ENCODE measurements at regions of chr1 and their contacts with region 1.

Region 1: GRCh38 chr1:21334214-21335087 is 44.2 kb upstream of the ECE1 start:
- DNase-seq: peak; percentile 90
- H3K4me3 ChIP-seq: peak overlapping the region; percentile 0 to 37 (median 31)
- H3K27ac ChIP-seq: peak overlapping the region; percentile 61 to 96 (median 91)
- H3K4me1 ChIP-seq: peaks cover 0 to 99% (median 96%) of the 10 kb centered on the region in 4 donors
- H3K27me3 ChIP-seq: no peaks in the 10 kb centered on the region
- CTCF ChIP-seq: peak; percentile 81 to 93 (median 88)
- EP300 ChIP-seq: no peak
- POLR2A ChIP-seq: no peak

Region 2: DNA sequence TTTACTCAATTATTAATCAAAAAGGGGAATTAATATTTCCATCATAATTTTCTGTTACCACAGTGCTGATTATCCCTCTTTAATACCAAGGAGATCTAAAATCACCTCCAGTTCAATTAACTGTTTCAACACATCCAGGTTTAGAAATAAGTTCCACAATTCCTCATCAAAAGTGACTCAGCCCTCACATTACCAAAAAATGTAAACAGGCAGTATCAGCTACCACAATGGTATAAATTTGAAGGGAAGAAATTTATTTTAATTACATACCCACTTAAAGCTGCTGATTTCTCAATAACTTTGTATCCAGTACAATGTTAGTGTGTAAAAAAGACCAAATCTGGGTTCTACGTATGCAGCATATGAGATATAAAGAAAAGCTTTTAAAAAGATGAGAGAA is 209.6 kb before region 1 on chr1:
- intact Hi-C with region 1: no loop called
- DNase-seq: no peak
- H3K4me3 ChIP-seq: no peak overlapping the region
- H3K27ac ChIP-seq: no peak overlapping the region
- H3K4me1 ChIP-seq: peaks cover 0 to 23% (median 21%) of the 10 kb centered on the region in 4 donors
- H3K27me3 ChIP-seq: no peaks in the 10 kb centered on the region
- CTCF ChIP-seq: no peak
- EP300 ChIP-seq: no peak
- POLR2A ChIP-seq: no peak

Region 3: DNA sequence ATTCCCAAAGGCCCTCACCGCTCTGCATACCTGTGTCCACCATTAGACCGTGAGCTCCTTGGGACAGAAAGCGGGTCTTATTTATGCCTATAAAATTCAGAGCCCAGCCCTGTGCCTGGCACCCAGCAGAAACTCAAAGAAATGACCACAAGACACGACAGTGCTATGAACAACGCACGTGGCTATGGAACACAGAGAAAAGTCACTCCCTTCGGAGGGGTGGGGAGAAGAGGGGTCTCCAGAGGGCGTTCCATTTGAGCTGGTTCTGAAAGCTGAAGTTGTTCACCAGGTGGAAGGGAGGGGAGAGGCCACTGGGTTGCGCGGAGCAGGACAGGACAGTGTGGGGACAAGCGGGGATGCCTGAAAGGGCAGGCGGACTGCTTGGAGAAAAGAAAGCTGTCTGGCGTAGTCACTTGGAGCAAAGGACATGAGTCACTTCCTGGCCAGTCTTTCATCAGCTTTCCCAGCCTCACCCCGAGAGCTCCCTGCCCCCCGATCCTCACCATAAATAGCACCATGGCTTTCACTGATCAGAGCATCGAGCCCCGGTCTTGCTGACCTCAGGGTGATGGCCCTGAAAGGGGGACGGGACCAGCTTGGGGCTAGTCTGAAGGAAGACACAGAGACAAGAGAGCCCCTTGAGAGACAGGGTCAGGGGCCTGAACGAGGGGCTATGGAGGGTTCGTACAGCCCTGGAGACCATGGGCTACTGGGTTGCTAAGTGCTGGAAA is 72.7 kb before region 1 on chr1:
- intact Hi-C with region 1: loop called (anchors 2 kb)
- DNase-seq: peak; percentile 92
- H3K4me3 ChIP-seq: peak overlapping the region in 1 of 4 donors; percentile 9
- H3K27ac ChIP-seq: peak overlapping the region; percentile 85 to 91 (median 86)
- H3K4me1 ChIP-seq: peaks cover 0 to 41% (median 36%) of the 10 kb centered on the region in 4 donors
- H3K27me3 ChIP-seq: no peaks in the 10 kb centered on the region
- CTCF ChIP-seq: no peak
- EP300 ChIP-seq: peak in 1 of 4 donors; percentile 79
- POLR2A ChIP-seq: no peak

Region 4: GRCh38 chr1:21308847-21309652 is 25.4 kb before region 1 on chr1:
- intact Hi-C with region 1: loop called (anchors 1 kb)
- DNase-seq: peak; percentile 97
- H3K4me3 ChIP-seq: peak overlapping the region in 1 of 4 donors; percentile 5
- H3K27ac ChIP-seq: peak overlapping the region; percentile 71 to 96 (median 91)
- H3K4me1 ChIP-seq: peaks cover 0 to 100% (median 97%) of the 10 kb centered on the region in 4 donors
- H3K27me3 ChIP-seq: no peaks in the 10 kb centered on the region
- CTCF ChIP-seq: no peak
- EP300 ChIP-seq: peak; percentile 65 to 90 (median 87)
- POLR2A ChIP-seq: no peak

Region 5: GRCh38 chr1:21318714-21319159 is 15.7 kb before region 1 on chr1:
- intact Hi-C with region 1: loop called (anchors 2 kb)
- DNase-seq: peak; percentile 98
- H3K4me3 ChIP-seq: no peak overlapping the region
- H3K27ac ChIP-seq: peak overlapping the region; percentile 83 to 96 (median 91)
- H3K4me1 ChIP-seq: peaks cover 0 to 100% (median 100%) of the 10 kb centered on the region in 4 donors
- H3K27me3 ChIP-seq: no peaks in the 10 kb centered on the region
- CTCF ChIP-seq: no peak
- EP300 ChIP-seq: peak in 3 of 4 donors; percentile 23 to 77 (median 57)
- POLR2A ChIP-seq: no peak

Region 6: DNA sequence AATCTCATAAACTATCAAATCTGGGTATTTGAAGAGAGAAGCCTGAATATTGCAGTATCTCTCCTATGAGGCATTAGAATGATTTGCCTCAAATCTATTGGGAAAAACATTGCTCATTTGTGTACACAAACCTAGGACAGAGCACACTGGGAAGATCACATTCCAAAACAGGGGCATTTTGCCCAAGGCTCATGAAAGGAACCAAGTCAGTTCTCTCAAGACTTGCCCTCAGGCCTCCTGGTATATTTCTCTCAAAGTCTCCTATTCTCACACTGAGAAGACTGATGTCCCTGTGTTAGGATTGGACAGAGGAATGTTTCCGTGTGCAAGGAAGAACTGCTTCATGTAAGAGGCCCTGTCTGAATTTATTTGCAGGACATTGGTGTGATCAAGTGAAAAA is 144.5 kb after region 1 on chr1:
- intact Hi-C with region 1: no loop called
- DNase-seq: no peak
- H3K4me3 ChIP-seq: no peak overlapping the region
- H3K27ac ChIP-seq: no peak overlapping the region
- H3K4me1 ChIP-seq: no peaks in the 10 kb centered on the region
- H3K27me3 ChIP-seq: no peaks in the 10 kb centered on the region
- CTCF ChIP-seq: no peak
- EP300 ChIP-seq: no peak
- POLR2A ChIP-seq: no peak

Region 7: DNA sequence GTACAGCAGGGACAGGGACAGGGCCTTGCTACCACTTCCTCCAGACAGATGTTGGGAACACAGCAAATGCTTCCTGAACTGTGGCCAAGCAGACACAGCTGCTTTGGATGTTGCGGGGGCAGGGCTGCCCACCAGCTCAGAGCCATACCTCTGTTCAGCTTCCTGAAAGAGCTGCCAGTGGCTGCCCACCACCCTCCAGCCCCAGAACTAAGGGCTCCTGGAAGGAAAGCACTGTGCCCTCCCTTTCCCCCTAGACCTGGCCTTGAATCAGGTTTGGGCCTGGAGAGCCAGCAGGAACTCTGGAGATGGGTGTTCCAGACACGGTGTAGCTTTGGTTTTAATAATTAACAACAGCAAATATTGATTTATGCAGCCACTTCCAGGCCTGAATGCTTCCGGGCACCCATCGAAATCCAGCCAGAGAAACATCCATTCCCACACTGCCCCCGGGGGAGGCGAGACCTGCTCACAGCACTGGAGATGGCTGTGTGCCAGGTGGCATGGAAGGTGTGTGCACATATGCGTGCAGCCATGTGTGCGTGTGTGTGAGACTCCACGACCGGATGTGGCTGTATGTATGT is 289.0 kb after region 1 on chr1:
- intact Hi-C with region 1: no loop called
- DNase-seq: no peak
- H3K4me3 ChIP-seq: no peak overlapping the region
- H3K27ac ChIP-seq: no peak overlapping the region
- H3K4me1 ChIP-seq: peaks cover 0 to 12% (median 4%) of the 10 kb centered on the region in 4 donors
- H3K27me3 ChIP-seq: peaks cover 0 to 71% (median 28%) of the 10 kb centered on the region in 3 donors
- CTCF ChIP-seq: no peak
- EP300 ChIP-seq: no peak
- POLR2A ChIP-seq: no peak

Region 8: DNA sequence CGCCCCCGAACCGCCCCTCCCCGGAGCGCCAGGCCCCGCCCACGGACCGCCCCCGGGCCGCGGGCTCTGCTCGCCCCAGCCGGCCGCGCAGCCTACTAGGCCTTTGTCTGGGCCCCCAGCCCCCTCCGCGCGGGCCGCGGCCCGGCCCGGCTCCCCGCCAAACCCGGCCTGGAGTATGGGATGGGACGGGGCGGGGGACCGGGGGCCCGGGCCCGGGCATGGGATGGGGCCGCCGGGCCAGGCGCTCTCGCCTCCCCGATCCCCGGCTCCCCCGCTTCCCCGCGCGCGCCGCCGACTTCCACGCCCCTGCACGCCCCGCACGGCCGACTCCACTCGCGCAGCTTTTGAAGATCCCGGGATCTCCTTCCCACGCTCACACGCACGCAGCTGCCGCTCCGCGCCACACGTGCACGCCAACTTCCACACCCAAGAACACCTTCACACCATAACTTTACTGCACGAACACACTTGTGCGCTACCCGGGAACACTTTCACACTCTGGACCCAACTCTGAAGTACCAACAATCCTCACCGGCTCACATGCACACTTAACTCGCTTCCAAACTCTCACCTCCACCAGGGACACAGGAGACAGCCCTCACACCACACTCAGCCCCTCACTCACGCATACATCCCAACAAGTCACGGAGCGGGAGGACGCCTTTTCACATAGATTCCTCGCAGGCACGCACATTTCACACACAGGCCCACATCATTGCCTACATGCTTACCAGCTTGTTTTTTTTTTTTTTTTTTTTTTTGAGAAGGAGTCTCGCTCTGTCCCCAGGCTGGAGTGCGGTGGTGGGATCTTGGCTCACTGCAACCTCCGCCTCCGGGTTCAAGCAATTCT is 603.1 kb after region 1 on chr1:
- intact Hi-C with region 1: loop called (anchors 10 kb)
- DNase-seq: peak; percentile 94
- H3K4me3 ChIP-seq: peak overlapping the region; percentile 0 to 95 (median 68)
- H3K27ac ChIP-seq: peak overlapping the region; percentile 92 to 99 (median 96)
- H3K4me1 ChIP-seq: peaks cover 0 to 88% (median 83%) of the 10 kb centered on the region in 4 donors
- H3K27me3 ChIP-seq: no peaks in the 10 kb centered on the region
- CTCF ChIP-seq: no peak
- EP300 ChIP-seq: no peak
- POLR2A ChIP-seq: peak in 1 of 2 donors; percentile 72

Measured in sigmoid colon (tissue), 7 donors.